AG04449 (cell line): ENCODE measurements at regions of chr14 and their contacts with region 1.

Region 1: DNA sequence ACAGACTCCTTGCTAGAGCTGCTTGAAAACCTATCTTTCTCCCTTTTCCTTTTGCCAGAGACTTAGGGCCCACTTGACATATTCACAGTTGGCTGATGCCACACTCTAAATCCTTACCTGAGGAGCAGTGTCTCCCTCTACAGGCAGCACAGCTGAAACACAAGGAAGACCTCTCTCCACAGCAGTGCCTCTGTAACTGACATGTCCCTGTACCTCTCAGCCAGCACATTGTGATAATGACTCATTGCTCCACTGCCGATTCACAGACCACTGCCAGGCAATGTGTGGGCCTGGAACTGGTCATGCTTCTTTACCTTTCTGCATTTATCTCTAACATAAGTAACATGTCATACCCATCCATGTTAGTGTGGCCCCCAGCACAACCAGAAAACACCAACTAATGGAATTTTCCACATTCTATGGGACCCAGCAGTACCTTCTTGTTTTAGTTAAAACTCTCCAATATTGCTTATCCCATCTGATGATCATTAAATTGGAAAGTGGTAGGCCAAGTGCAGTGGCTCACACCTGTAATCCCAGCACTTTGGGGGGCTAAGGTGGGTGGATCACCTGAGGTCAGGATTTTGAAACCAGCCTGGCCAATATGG is 56.5 kb downstream of the GTF2A1 start:
- DNase-seq: no peak
- H3K4me3 ChIP-seq: no peak overlapping the region
- CTCF ChIP-seq: peak; percentile 59

Region 2: GRCh38 chr14:81147140-81147897 is 17.0 kb before region 1 on chr14:
- CTCF ChIA-PET with region 1: no interaction called
- POLR2A ChIA-PET with region 1: no interaction called
- DNase-seq: no peak
- H3K4me3 ChIP-seq: no peak overlapping the region
- CTCF ChIP-seq: no peak

Region 3: DNA sequence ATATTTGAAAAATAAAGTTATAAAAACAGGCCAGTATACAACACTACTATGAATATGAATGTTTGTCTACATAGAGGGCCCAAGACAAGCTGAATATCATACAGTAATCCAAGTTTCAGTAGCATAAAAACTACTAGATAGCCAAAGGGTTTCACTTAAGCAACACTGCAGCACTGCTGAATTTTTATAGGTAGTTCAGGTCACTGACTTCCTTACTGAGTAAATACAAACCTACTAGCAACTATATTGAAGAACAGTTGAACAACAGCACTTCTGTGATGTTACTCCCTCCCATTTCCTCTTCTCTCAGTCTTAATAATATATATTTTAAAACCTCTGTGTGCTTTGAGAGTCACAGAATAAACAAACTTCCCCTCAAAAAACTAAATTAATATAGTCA is 13.8 kb after region 1 on chr14:
- CTCF ChIA-PET with region 1: interaction called, 16 read pairs
- POLR2A ChIA-PET with region 1: no interaction called
- DNase-seq: no peak
- H3K4me3 ChIP-seq: no peak overlapping the region
- CTCF ChIP-seq: no peak

Region 4: DNA sequence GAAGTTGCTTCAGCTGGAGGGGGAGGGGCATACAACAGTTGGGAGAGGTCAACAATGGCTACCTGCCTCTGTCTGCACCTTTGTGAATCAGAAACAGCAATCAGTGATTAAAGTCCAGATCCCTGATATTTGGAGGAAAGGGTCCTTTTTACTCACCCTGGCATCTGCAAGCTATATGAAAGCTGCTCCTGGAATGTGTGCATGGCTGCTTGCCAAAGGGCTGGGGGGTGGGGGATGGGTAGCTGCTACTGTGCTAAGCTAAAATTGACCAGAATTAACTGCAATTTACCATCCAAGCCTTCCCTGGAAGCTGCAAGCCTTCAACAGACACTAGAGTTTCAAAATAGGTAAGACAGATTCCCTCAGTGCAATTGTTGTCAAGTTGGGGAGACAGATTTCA is 70.0 kb after region 1 on chr14:
- CTCF ChIA-PET with region 1: no interaction called
- POLR2A ChIA-PET with region 1: no interaction called
- DNase-seq: no peak
- H3K4me3 ChIP-seq: no peak overlapping the region
- CTCF ChIP-seq: no peak